Activated CD4-positive, alpha-beta memory T cell treated with anti-CD3 and anti-CD28 coated beads for 36 hours (primary cell): ENCODE measurements at regions of chr4 and their contacts with region 1.

Region 1: GRCh38 chr4:89226665-89227574 is 80.7 kb downstream of the GPRIN3 start:
- DNase-seq: peak; percentile 82
- H3K4me3 Mint-ChIP-seq: peak overlapping the region; percentile 57
- H3K27ac Mint-ChIP-seq: no peak overlapping the region
- H3K4me1 Mint-ChIP-seq: peaks cover 16% of the 10 kb centered on the region
- H3K27me3 Mint-ChIP-seq: peaks cover 2% of the 10 kb centered on the region

Region 2: DNA sequence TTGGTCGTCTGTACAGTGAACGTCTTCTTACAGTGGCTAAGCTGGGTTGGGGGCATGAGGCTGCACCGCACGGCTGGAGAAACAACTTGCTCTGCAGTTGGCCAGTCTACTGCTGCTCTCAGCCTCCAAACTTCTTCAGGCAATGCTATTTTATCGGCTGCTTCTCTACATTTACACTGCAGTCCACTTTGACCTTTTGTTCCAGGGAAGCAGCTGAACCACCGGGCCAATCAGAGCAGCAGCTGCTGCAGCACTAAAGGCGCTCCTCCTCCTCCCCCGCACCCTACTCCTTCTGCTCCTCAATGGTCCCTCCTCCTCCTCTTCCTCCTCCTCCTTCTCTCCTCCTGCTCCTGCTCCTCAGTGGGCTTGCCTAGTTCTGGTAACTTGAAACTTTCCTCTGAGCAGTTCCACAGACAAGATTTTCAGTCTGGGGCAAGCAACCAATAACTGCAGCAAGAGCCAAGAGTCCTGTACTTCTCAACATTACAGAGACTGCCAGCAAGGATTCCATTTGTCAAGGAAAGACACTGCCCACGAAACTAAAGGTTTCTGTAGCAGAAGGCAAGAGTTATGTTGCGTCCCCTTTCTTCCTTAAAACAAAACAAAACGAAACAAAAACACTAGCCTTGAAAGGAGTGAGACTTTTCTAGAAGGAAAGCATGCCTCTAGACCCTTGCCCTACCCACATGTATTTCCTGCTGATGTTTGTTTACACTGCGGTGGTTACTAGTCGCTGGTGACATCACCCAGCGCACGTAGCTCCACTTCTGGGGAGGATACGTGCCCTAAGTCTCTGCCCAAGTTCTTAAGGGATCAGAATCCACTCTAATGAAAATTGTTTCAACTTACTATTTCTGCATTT is 403.6 kb before region 1 on chr4:
- CTCF ChIA-PET with region 1: no interaction called
- POLR2A ChIA-PET with region 1: no interaction called
- intact Hi-C with region 1: loop called (anchors 10 kb)
- DNase-seq: peak; percentile 79
- H3K4me3 Mint-ChIP-seq: peak overlapping the region; percentile 87
- H3K27ac Mint-ChIP-seq: peak overlapping the region; percentile 84
- H3K4me1 Mint-ChIP-seq: peaks cover 37% of the 10 kb centered on the region
- H3K27me3 Mint-ChIP-seq: no peaks in the 10 kb centered on the region

Region 3: DNA sequence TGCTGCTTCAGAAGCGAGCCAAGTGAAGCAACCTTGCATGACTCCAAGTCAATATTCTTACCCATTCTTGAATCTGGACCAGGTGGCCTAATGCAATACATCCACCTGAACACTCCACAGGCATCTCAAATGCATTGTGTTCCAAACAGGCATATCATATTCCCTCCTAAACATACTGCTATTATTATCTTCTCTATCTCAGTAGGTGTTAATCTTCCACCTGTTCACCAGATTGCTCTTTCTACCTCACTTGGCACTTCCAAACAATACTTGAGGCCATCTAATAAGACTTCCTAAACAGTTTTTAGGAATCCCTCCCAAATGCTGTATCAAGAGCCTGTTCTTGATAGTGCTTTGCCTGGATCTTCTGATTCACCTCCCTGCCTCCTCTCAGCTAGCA is 10.1 kb before region 1 on chr4:
- CTCF ChIA-PET with region 1: interaction called, 15 read pairs
- POLR2A ChIA-PET with region 1: no interaction called
- intact Hi-C with region 1: no loop called
- DNase-seq: no peak
- H3K4me3 Mint-ChIP-seq: no peak overlapping the region
- H3K27ac Mint-ChIP-seq: no peak overlapping the region
- H3K4me1 Mint-ChIP-seq: peaks cover 2% of the 10 kb centered on the region
- H3K27me3 Mint-ChIP-seq: peaks cover 2% of the 10 kb centered on the region

Region 4: GRCh38 chr4:89248879-89249281 is 22.0 kb after region 1 on chr4:
- CTCF ChIA-PET with region 1: interaction called, 11 read pairs
- POLR2A ChIA-PET with region 1: no interaction called
- intact Hi-C with region 1: no loop called
- DNase-seq: no peak
- H3K4me3 Mint-ChIP-seq: no peak overlapping the region
- H3K27ac Mint-ChIP-seq: peak overlapping the region; percentile 15
- H3K4me1 Mint-ChIP-seq: peaks cover 74% of the 10 kb centered on the region
- H3K27me3 Mint-ChIP-seq: no peaks in the 10 kb centered on the region

Region 5: DNA sequence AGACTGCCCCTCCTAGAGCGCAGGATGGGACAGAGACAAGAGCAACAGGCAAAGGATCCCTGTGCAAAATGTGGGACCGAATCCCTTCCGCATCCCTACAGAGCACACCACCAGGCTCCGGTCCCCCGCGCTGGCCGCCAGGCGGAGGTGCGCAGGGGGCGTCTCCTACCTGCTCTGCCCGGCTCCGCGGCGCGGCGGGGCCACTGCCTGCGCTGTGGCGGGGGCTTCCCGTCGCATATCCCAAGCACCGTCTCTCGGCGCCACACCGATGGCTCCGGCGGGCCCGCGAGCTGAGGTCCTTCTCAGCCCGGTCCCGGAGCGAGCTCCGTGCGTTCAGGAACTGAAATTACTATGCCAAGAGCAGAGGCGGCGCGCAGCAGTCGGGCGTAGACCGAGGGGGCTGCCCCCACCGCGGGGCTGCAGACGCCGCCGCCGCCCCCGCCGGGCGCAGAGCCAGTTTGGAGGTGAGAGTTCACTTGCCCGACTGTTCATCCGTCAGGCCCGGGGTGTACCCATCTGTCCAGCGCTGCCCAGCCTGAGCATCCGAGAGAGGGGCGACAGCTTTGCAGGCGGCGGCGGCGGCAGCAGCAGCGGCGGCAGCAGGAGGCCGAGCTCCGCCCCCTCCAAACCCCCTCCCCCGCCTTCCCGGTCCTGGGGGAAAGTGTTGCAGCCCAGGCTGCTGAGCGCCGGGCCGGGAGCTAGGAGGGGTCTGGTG is 80.7 kb after region 1 on chr4 and contains the start of gene GPRIN3:
- CTCF ChIA-PET with region 1: interaction called, 10 read pairs
- POLR2A ChIA-PET with region 1: no interaction called
- intact Hi-C with region 1: loop called (anchors 1 kb)
- DNase-seq: peak; percentile 81
- H3K4me3 Mint-ChIP-seq: peak within 1 kb of the TSS; percentile 89
- H3K27ac Mint-ChIP-seq: peak within 1 kb of the TSS; percentile 83
- H3K4me1 Mint-ChIP-seq: peaks cover 62% of the 10 kb centered on the region
- H3K27me3 Mint-ChIP-seq: no peaks in the 10 kb centered on the region
- total RNA-seq, gene GPRIN3: 20.0 to 22.7 TPM

Region 6: GRCh38 chr4:89752932-89753581 is 526.1 kb after region 1 on chr4:
- CTCF ChIA-PET with region 1: no interaction called
- POLR2A ChIA-PET with region 1: no interaction called
- intact Hi-C with region 1: no loop called
- DNase-seq: no peak
- H3K4me3 Mint-ChIP-seq: no peak overlapping the region
- H3K27ac Mint-ChIP-seq: no peak overlapping the region
- H3K4me1 Mint-ChIP-seq: no peaks in the 10 kb centered on the region
- H3K27me3 Mint-ChIP-seq: no peaks in the 10 kb centered on the region

Region 7: GRCh38 chr4:89788206-89789072 is 561.5 kb after region 1 on chr4:
- CTCF ChIA-PET with region 1: no interaction called
- POLR2A ChIA-PET with region 1: no interaction called
- intact Hi-C with region 1: no loop called
- DNase-seq: no peak
- H3K4me3 Mint-ChIP-seq: no peak overlapping the region
- H3K27ac Mint-ChIP-seq: no peak overlapping the region
- H3K4me1 Mint-ChIP-seq: no peaks in the 10 kb centered on the region
- H3K27me3 Mint-ChIP-seq: peaks cover 4% of the 10 kb centered on the region

Region 8: GRCh38 chr4:89904524-89904923 is 677.6 kb after region 1 on chr4:
- CTCF ChIA-PET with region 1: interaction called, 6 read pairs
- POLR2A ChIA-PET with region 1: no interaction called
- intact Hi-C with region 1: loop called (anchors 5 kb)
- DNase-seq: no peak
- H3K4me3 Mint-ChIP-seq: no peak overlapping the region
- H3K27ac Mint-ChIP-seq: no peak overlapping the region
- H3K4me1 Mint-ChIP-seq: peaks cover 2% of the 10 kb centered on the region
- H3K27me3 Mint-ChIP-seq: no peaks in the 10 kb centered on the region